ENCODE measurements at regions of chr11 and their contacts with region 1.

Region 1: DNA sequence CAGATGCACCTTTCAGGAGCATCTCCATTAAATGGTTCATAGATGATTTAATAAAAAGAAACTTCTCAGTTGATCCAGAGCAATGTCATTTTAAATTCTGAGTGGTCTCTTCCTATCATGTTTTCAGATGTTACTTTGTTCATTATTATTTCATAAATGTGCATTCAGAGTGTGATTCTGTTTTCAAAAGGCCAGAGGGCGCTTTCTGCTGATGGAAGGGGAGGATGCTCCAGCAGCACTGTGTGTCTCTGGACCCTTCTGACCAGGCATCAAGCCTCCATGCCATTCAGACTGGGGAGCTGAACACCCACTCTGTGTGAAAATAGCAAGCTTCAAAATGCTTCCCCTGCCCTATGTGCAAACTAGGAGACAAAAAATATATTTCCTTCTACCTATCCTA is 23.9 kb upstream of the CRTAM start:
- DNase-seq: no peak
- CTCF ChIP-seq: peak; percentile 34

Region 2: DNA sequence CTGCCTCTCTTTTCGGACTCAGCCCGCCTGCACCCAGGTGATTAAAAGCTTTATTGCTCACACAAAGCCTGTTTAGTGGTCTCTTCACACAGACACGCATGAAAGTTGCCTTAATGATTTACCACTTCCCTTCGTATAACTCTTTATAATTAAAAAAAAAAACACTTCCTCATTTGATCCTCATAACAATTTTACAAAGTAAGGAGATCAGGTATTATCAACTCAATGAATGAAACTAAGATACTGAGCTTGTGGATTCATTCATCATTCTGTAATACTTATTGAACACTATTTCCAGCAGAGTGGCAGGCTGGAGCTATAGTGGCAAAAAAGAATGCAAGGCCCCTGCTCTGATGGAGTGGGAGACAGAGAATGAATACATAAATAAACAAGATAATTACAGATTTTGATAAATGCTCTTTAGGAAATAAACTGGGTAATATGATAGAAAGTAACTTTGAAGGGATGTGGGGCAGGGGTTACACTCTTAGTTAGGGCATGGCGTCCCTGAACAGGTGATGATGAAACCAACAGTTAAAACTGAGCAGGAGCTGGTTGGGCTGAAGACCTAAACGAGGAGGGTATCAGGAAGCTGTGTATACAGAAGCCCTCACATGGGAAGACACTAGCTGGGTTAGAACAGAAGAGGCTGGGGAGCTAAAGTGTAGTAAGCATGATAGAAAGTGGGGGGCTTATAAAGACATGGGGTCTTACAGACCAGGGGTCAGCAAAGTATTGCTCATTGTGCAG is 18.5 kb after region 1 on chr11:
- CTCF ChIA-PET with region 1: interaction called, 10 read pairs
- POLR2A ChIA-PET with region 1: no interaction called
- DNase-seq: no peak
- CTCF ChIP-seq: no peak

Measured in GM10248 (cell line).